ENCODE measurements at regions of chr3 and their contacts with region 1.

Region 1: GRCh38 chr3:51941798-51942602 is at the starts of genes PARP3 and RRP9:
- DNase-seq: peak; percentile 99
- ATAC-seq: peak; percentile 89
- H3K4me3 ChIP-seq: peak within 1 kb of the TSS; percentile 82 to 89
- H3K27ac ChIP-seq: peak within 1 kb of the TSS; percentile 96
- H3K4me1 ChIP-seq: peaks cover 23 to 29% of the 10 kb centered on the region in 2 experiments
- H3K27me3 ChIP-seq: no peaks in the 10 kb centered on the region
- CTCF ChIP-seq: peak in 2 of 3 experiments; percentile 95 to 99; a peak in 4 of 6 replicates
- POLR2A ChIP-seq: no peak
- RAD21 ChIP-seq: no peak
- total RNA-seq, gene PARP3: 17.5 TPM
- total RNA-seq, gene RRP9: 71.3 TPM

Region 2: GRCh38 chr3:51605938-51606337 is 336.1 kb before region 1 on chr3:
- CTCF ChIA-PET with region 1: no interaction called
- POLR2A ChIA-PET with region 1: no interaction called
- RAD21 ChIA-PET with region 1: no interaction called
- intact Hi-C with region 1: no loop called
- DNase-seq: no peak
- ATAC-seq: no peak
- H3K4me3 ChIP-seq: no peak overlapping the region
- H3K27ac ChIP-seq: no peak overlapping the region
- H3K4me1 ChIP-seq: no peaks in the 10 kb centered on the region
- H3K27me3 ChIP-seq: no peaks in the 10 kb centered on the region
- CTCF ChIP-seq: no peak
- POLR2A ChIP-seq: no peak
- RAD21 ChIP-seq: no peak

Region 3: DNA sequence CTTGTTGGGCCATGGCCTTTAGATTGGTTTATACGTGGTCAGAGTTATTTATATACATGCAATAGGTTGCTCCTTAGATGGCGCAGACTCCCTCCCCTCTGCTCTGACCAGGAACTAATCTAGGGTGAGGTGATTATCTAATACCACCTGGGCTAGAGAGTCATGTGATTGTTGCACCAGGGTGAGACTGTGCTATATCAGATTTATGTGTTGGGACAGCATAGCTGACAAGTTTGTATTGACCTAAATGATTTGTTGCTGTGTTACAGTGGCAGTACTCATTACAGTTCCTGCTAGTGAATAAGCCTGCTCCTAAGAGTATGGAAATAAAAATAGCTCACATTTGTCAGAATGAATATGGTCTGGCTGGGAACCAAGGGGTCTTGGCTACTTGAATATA is 155.7 kb before region 1 on chr3:
- CTCF ChIA-PET with region 1: no interaction called
- POLR2A ChIA-PET with region 1: no interaction called
- RAD21 ChIA-PET with region 1: no interaction called
- intact Hi-C with region 1: no loop called
- DNase-seq: no peak
- ATAC-seq: no peak
- H3K4me3 ChIP-seq: no peak overlapping the region
- H3K27ac ChIP-seq: no peak overlapping the region
- H3K4me1 ChIP-seq: no peaks in the 10 kb centered on the region
- H3K27me3 ChIP-seq: 0 out of 2 replicates have a peak, but pooled peaks cover 8% of the 10 kb centered on the region
- CTCF ChIP-seq: no peak
- POLR2A ChIP-seq: no peak
- RAD21 ChIP-seq: no peak

Region 4: GRCh38 chr3:51974963-51975851 is 33.2 kb after region 1 on chr3 and contains the start of gene ABHD14A:
- CTCF ChIA-PET with region 1: interaction called, 46 read pairs
- POLR2A ChIA-PET with region 1: interaction called, 16 read pairs
- RAD21 ChIA-PET with region 1: interaction called, 6 to 7 read pairs
- intact Hi-C with region 1: loop called (anchors 1 kb)
- DNase-seq: no peak
- ATAC-seq: peak; percentile 70
- H3K4me3 ChIP-seq: peak within 1 kb of the TSS; percentile 93 to 99
- H3K27ac ChIP-seq: peak within 1 kb of the TSS; percentile 97
- H3K4me1 ChIP-seq: peaks cover 17 to 45% of the 10 kb centered on the region in 2 experiments
- H3K27me3 ChIP-seq: no peaks in the 10 kb centered on the region
- CTCF ChIP-seq: no peak
- POLR2A ChIP-seq: peak; percentile 61
- RAD21 ChIP-seq: no peak
- total RNA-seq, gene ABHD14A: 11.6 TPM

Region 5: DNA sequence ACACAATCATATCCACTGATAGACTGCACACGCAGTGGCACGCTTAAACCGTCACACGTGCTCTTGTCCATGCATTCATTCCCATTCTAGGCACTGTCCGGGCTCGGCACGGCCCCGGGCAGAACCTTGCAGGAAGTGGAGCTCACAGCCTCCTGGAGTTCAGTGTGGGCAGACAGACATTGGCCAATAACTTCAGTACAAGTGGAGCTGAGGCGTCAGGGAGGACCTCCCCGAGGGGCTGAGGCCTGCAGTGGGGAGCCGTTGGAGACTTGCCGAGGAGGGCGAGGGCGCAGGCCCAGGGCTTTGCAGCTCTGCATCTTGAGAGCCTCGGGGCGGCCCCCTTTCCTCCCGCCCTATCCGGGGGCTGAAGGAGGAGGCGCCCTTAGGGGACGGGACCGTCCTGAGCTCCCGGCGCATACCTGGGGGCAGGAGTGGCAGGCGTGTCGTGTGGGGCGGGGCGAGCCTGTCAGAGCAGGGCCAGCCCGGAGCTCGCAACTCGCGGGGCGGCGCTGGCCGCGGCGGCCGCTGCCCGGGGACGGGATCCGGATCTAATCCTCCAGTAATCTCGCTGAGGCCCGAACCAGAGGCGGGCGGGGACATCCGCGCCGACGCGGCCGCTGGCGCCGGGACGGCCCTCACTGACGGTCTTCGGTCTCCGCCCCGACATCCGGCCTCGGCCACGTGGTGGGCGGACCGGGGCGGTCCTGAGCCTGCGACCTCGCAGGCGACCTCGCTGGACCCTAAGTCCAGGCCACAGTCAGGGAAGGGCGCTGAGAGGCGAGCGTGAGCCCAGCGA is 41.0 kb after region 1 on chr3 and contains the start of gene ACY1:
- CTCF ChIA-PET with region 1: interaction called, 15 read pairs
- POLR2A ChIA-PET with region 1: interaction called, 13 read pairs
- RAD21 ChIA-PET with region 1: interaction called in 1 of 2 experiments, 5 read pairs
- intact Hi-C with region 1: no loop called
- DNase-seq: peak; percentile 57
- ATAC-seq: peak; percentile 89
- H3K4me3 ChIP-seq: peak within 1 kb of the TSS; percentile 75 to 86
- H3K27ac ChIP-seq: peak within 1 kb of the TSS; percentile 82
- H3K4me1 ChIP-seq: peaks cover 24 to 56% of the 10 kb centered on the region in 2 experiments
- H3K27me3 ChIP-seq: no peaks in the 10 kb centered on the region
- CTCF ChIP-seq: no peak
- POLR2A ChIP-seq: peak; percentile 18
- RAD21 ChIP-seq: no peak
- total RNA-seq, gene ACY1: 73.2 TPM

Region 6: GRCh38 chr3:51995346-51996163 is 53.6 kb after region 1 on chr3 and contains the start of gene RPL29:
- CTCF ChIA-PET with region 1: interaction called, 4 read pairs
- POLR2A ChIA-PET with region 1: interaction called, 31 read pairs
- RAD21 ChIA-PET with region 1: interaction called in 1 of 2 experiments, 4 read pairs
- intact Hi-C with region 1: loop called (anchors 2 kb)
- DNase-seq: peak; percentile 90
- ATAC-seq: peak; percentile 72
- H3K4me3 ChIP-seq: peak within 1 kb of the TSS; percentile 82 to 100
- H3K27ac ChIP-seq: peak within 1 kb of the TSS; percentile 88
- H3K4me1 ChIP-seq: peaks cover 13 to 46% of the 10 kb centered on the region in 2 experiments
- H3K27me3 ChIP-seq: no peaks in the 10 kb centered on the region
- CTCF ChIP-seq: no peak
- POLR2A ChIP-seq: peak; percentile 92
- RAD21 ChIP-seq: no peak
- total RNA-seq, gene RPL29: 1,880 TPM

Region 7: GRCh38 chr3:52001443-52001974 is 59.5 kb after region 1 on chr3:
- CTCF ChIA-PET with region 1: interaction called, 4 read pairs
- POLR2A ChIA-PET with region 1: no interaction called
- RAD21 ChIA-PET with region 1: interaction called in 1 of 2 experiments, 4 read pairs
- intact Hi-C with region 1: loop called (anchors 2 kb)
- DNase-seq: peak; percentile 59
- ATAC-seq: peak; percentile 96
- H3K4me3 ChIP-seq: no peak overlapping the region
- H3K27ac ChIP-seq: no peak overlapping the region; the same call in 1 of the 2 replicates
- H3K4me1 ChIP-seq: peaks cover 11 to 35% of the 10 kb centered on the region in 2 experiments
- H3K27me3 ChIP-seq: no peaks in the 10 kb centered on the region
- CTCF ChIP-seq: peak in 2 of 3 experiments; percentile 95 to 98; a peak in 4 of 6 replicates
- POLR2A ChIP-seq: no peak
- RAD21 ChIP-seq: no peak

Region 8: GRCh38 chr3:52014613-52015012 is 72.6 kb after region 1 on chr3:
- CTCF ChIA-PET with region 1: no interaction called
- POLR2A ChIA-PET with region 1: no interaction called
- RAD21 ChIA-PET with region 1: no interaction called
- intact Hi-C with region 1: no loop called
- DNase-seq: peak; percentile 15
- ATAC-seq: peak; percentile 87
- H3K4me3 ChIP-seq: no peak overlapping the region
- H3K27ac ChIP-seq: no peak overlapping the region
- H3K4me1 ChIP-seq: peaks cover 0 to 6% of the 10 kb centered on the region in 2 experiments; a peak in 1 of 4 replicates
- H3K27me3 ChIP-seq: no peaks in the 10 kb centered on the region
- CTCF ChIP-seq: peak; percentile 50 to 75 (median 63); a peak in 5 of 6 replicates
- POLR2A ChIP-seq: no peak
- RAD21 ChIP-seq: no peak; the same call in none of the 2 replicates

Region 9: DNA sequence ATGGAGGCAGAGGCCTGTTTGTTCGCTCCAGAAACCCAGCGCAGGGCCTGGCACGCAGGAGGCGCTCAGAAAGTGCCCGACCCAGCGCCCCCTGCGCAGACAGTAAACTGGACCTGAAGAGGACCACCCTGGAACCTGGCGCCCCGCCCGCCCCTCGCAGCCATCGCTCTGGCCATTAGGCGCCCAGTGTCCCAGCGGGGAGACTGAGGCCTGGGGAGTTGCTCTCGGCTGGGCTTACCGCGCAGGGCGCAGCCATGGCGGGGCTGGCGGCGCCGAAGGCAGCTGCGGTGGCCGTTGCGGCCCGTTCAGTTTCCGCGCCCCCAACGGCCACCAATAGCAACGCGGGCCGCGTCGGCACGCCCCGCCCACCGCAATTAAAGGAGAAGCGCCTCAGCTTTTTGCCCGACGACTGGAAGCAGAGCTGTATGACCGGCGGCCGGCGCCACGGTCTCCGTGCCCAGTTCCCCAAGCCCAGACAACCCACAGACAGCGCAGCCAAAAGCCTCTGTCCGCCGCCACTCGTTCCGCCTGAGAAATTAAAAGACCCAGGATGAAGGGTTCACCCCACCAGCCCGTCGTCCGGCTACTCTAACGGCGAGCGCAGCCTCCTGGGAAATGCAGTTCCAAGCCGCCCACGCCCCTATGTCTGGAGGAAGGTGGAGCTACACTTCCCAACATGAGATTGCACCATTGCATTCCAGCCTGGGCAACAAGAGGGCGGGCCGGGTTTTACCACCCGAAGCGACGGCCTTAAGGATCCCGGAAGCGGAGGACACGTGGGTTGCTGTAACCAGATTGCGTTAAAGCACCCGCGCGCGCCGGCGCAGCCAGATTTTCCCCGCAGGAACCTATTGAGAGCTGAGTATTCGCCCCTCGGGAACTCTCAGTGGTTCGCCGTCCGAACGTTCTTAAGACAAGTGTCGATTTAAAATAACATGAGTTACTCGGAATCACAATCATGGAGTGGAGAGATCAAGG is 212.4 kb after region 1 on chr3 and contains the start of gene POC1A:
- CTCF ChIA-PET with region 1: interaction called, 4 read pairs
- POLR2A ChIA-PET with region 1: interaction called, 3 read pairs
- RAD21 ChIA-PET with region 1: no interaction called
- intact Hi-C with region 1: loop called (anchors 5 kb)
- DNase-seq: peak; percentile 97
- ATAC-seq: peak; percentile 89
- H3K4me3 ChIP-seq: peak within 1 kb of the TSS; percentile 86 to 92
- H3K27ac ChIP-seq: peak within 1 kb of the TSS; percentile 62
- H3K4me1 ChIP-seq: peaks cover 8 to 30% of the 10 kb centered on the region in 2 experiments
- H3K27me3 ChIP-seq: no peaks in the 10 kb centered on the region
- CTCF ChIP-seq: no peak
- POLR2A ChIP-seq: peak; percentile 59
- RAD21 ChIP-seq: no peak
- total RNA-seq, gene POC1A: 34.0 TPM